AG04449 (cell line): ENCODE measurements at regions of chr1 and their contacts with region 1.

Region 1: DNA sequence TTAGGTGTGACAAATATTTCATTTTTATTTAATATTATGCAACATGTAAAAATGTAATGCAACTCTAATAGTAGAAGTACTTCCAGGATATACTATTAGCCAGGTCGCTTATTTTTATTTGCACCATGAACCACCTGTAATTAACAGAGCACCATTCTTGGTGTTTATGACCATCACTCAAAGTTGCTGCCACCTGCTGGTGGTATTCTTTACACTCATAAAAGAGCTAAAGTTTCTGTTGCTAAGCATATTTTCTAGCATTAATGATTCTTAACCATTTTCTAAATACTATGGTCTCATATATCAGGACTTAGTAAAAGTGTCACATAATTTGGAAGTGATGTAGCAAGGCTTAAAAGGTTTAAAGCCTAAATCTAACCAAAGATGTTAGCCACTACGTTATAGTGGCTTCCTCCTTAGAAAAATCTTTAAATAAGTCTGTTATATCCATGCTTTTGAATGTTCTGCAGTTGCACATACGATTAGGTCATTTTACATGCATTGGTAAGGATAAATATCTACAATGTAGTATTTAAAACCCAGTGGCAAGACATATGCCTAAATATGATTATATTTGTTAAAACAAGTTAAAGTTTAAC is 244.5 kb downstream of the NEGR1 start:
- DNase-seq: no peak
- H3K4me3 ChIP-seq: no peak overlapping the region
- CTCF ChIP-seq: peak; percentile 34

Region 2: DNA sequence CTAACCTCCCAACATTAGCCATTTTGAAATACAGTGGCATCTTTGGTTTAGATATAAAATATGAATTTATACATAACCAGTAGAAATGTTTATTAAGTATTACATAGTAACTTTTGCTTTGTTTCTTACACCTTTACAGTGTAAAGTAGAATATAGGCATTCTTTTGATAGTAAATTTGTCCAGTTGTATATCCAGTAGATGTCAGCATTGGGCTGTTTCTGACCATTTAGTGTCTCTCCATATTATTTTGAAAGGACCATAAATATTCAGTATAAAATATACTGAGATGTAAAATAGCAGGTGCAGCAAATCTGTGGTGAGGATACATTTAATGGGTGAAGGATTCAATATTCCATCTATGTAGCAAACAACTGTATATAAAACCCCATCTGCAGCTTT is 841.2 kb before region 1 on chr1:
- CTCF ChIA-PET with region 1: interaction called, 16 read pairs
- POLR2A ChIA-PET with region 1: no interaction called
- DNase-seq: no peak
- H3K4me3 ChIP-seq: no peak overlapping the region
- CTCF ChIP-seq: no peak

Region 3: DNA sequence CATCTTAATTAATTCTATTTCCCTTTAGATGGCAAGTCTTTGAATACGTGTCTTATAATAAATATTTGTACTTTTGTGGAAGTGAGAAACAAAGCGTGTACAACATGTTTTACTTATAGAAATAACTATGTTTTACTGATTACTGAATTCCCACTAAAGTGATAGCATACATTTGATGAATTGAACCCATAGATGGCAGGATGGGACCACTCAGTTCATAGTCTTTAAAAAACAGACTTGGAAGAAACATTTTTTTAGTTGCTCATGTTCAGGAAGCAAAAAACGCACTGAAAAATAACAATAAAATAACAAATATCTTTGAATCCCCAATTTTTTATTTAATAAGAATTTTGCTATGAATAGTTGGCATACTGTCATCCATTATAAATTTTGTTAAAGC is 449.9 kb before region 1 on chr1:
- CTCF ChIA-PET with region 1: interaction called, 35 read pairs
- POLR2A ChIA-PET with region 1: no interaction called
- DNase-seq: peak; percentile 10
- H3K4me3 ChIP-seq: no peak overlapping the region
- CTCF ChIP-seq: peak; percentile 40

Region 4: GRCh38 chr1:71593523-71593922 is 444.3 kb before region 1 on chr1:
- CTCF ChIA-PET with region 1: interaction called, 34 read pairs
- POLR2A ChIA-PET with region 1: no interaction called
- DNase-seq: no peak
- H3K4me3 ChIP-seq: no peak overlapping the region
- CTCF ChIP-seq: peak; percentile 27

Region 5: GRCh38 chr1:72015006-72015405 is 22.8 kb before region 1 on chr1:
- CTCF ChIA-PET with region 1: interaction called, 21 read pairs
- POLR2A ChIA-PET with region 1: no interaction called
- DNase-seq: no peak
- H3K4me3 ChIP-seq: no peak overlapping the region
- CTCF ChIP-seq: no peak

Region 6: DNA sequence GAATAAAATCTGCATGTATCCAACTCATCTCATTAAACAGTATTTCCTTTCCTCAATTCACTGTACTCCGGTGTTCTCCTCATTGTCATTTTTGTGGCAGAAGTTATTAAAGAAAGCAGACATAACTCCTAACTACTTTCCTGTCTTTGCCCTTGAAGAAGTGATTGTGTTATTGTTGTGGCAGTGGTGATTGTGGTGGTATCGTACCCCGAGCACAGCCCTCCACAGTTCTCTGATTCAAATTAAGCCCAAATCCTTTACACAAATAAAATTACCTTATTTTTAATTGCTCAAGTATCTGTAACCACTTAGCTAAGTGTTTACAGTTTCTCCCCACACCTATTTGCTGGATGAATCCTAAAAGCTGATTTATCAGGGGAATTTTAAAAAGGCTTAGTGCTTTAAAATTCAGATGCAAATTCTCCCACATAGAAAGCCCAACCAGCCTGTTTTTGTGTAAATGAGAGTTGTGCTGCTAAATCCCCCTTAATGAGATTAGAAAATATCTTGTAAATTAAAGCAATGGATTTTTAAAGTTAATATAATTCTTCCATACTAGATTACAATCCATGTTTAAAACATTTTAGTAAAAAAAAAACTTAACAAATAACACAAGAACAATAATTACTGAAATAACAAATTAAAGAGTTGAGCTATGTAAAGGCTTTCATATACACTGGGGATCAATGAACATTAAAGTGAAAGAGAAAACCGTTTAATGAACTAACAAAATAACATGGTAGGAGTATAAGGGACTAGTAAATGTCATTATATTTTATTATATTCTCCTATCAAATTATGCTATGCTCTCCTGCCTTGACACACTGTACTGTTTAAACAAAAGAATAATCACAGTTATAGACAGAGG is 14.5 kb before region 1 on chr1:
- CTCF ChIA-PET with region 1: interaction called, 11 read pairs
- POLR2A ChIA-PET with region 1: no interaction called
- DNase-seq: no peak
- H3K4me3 ChIP-seq: no peak overlapping the region
- CTCF ChIP-seq: no peak

Region 7: DNA sequence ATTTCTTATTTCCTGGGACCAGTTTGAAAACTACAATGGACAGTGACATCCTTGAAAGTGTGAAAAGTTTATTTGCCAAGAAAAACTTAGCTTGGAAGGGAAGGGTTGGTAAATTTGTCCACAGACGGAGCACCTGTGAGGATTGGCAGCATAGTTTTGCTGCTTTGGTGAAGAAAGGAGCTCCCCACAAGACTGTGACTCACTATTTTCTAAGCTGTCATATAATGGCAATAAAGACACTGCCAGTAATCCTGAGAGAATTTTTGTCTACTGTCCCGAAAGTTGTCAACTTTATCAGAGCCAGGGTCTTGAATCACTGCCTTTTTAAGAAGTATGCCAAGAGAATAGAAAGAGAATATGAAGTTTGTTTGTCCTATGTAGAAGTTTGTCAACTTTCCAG is 13.7 kb after region 1 on chr1:
- CTCF ChIA-PET with region 1: interaction called, 14 read pairs
- POLR2A ChIA-PET with region 1: no interaction called
- DNase-seq: no peak
- H3K4me3 ChIP-seq: no peak overlapping the region
- CTCF ChIP-seq: no peak

Region 8: DNA sequence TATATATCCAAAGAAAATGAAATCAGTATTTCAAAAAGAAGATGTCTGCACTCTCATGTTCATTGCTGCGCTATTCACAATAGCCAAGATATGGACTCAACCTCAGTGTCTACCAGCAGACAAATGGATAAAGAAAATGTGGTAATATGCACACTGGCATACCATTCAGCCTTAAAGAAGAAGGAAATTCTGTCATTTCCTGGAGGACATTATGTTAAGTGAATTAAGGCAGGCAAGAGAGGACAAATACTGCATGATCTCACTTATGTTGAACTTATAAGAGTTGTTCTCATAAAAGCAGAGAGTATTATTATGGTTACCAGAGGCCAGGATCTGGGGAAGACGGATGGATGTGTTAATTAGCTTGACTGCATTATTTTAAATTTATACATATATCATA is 128.6 kb after region 1 on chr1:
- CTCF ChIA-PET with region 1: no interaction called
- POLR2A ChIA-PET with region 1: no interaction called
- DNase-seq: no peak
- H3K4me3 ChIP-seq: no peak overlapping the region
- CTCF ChIP-seq: no peak

Region 9: GRCh38 chr1:72462186-72462905 is 424.5 kb after region 1 on chr1:
- CTCF ChIA-PET with region 1: no interaction called
- POLR2A ChIA-PET with region 1: no interaction called
- DNase-seq: no peak
- H3K4me3 ChIP-seq: no peak overlapping the region
- CTCF ChIP-seq: no peak